Ascending aorta (tissue), 2 donors: ENCODE measurements at regions of chr1 and their contacts with region 1.

Region 1: GRCh38 chr1:204506961-204507387 is 9.2 kb upstream of the MDM4 start:
- DNase-seq: peak; percentile 42 to 93
- H3K4me3 ChIP-seq: peak overlapping the region; percentile 56 to 59
- H3K27ac ChIP-seq: peak overlapping the region; percentile 85 to 87
- H3K4me1 ChIP-seq: peaks cover 0 to 4% of the 10 kb centered on the region in 2 donors
- H3K27me3 ChIP-seq: no peaks in the 10 kb centered on the region
- CTCF ChIP-seq: no peak

Region 2: GRCh38 chr1:203795441-203796235 is 711.3 kb before region 1 on chr1 and contains the starts of genes ZBED6 and ZC3H11A:
- intact Hi-C with region 1: loop called (anchors 5 kb)
- DNase-seq: peak; percentile 97 to 100
- H3K4me3 ChIP-seq: peak within 1 kb of the TSS; percentile 82 to 92
- H3K27ac ChIP-seq: peak within 1 kb of the TSS; percentile 96 to 98
- H3K4me1 ChIP-seq: peaks cover 9 to 38% of the 10 kb centered on the region in 2 donors
- H3K27me3 ChIP-seq: no peaks in the 10 kb centered on the region
- CTCF ChIP-seq: no peak
- total RNA-seq, gene ZBED6: 1.5 TPM
- total RNA-seq, gene ZC3H11A: 44.4 TPM

Region 3: DNA sequence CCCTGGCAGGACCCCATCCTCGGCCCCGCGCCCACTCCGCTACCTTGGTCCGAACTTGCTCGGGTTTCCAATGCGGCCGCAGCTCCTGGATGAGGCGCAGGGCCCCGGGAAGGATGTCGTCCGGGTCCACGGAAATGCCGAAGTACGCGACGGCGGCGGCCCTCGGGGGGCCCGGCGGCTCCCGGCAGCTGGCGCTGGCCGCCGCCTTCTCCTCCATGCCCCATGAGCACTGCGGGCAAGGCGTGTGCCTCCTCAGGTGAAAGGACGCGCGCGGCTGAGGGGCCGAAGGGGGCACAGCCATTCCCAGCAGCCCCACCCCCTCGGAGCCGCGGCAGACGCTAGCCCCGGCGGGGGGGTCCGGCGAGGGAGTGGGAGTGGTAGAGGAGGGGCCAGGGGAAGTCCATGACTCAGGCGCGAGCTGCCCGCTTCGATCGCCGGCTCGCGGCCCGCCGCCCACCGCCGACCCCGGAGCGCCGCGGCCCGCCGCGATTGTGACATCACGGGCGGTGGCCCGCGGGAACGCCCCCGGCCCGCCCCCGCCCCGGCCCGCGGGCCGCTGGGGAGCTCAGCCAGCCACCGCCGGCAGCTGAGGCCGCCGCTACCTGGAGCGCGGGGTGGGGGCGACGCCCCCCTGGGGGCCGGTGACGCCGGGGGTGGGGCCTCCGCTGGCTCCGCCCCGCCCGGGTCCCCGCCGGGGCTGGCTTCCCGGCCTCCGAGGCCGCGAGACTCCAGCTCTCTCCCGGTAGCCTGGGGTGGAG is 355.2 kb before region 1 on chr1 and contains the start of gene ETNK2:
- intact Hi-C with region 1: loop called (anchors 5 kb)
- DNase-seq: peak; percentile 35 to 87
- H3K4me3 ChIP-seq: peak within 1 kb of the TSS; percentile 89 to 90
- H3K27ac ChIP-seq: peak within 1 kb of the TSS; percentile 88 to 94
- H3K4me1 ChIP-seq: peaks cover 0 to 8% of the 10 kb centered on the region in 2 donors
- H3K27me3 ChIP-seq: no peaks in the 10 kb centered on the region
- CTCF ChIP-seq: no peak
- total RNA-seq, gene ETNK2: 22.0 TPM

Region 4: GRCh38 chr1:204411451-204412204 is 95.3 kb before region 1 on chr1 and contains the start of gene PPP1R15B:
- intact Hi-C with region 1: loop called (anchors 2 kb)
- DNase-seq: peak; percentile 84 to 98
- H3K4me3 ChIP-seq: peak within 1 kb of the TSS; percentile 76 to 100
- H3K27ac ChIP-seq: peak within 1 kb of the TSS; percentile 98 to 100
- H3K4me1 ChIP-seq: peaks cover 6 to 11% of the 10 kb centered on the region in 2 donors
- H3K27me3 ChIP-seq: no peaks in the 10 kb centered on the region
- CTCF ChIP-seq: no peak
- total RNA-seq, gene PPP1R15B: 36.1 TPM

Region 5: GRCh38 chr1:204431310-204432165 is 75.4 kb before region 1 on chr1:
- intact Hi-C with region 1: loop called (anchors 1 kb)
- DNase-seq: peak in 1 of 2 donors; percentile 89
- H3K4me3 ChIP-seq: no peak overlapping the region
- H3K27ac ChIP-seq: peak overlapping the region; percentile 59 to 65
- H3K4me1 ChIP-seq: peaks cover 0 to 19% of the 10 kb centered on the region in 2 donors
- H3K27me3 ChIP-seq: no peaks in the 10 kb centered on the region
- CTCF ChIP-seq: peak; percentile 81 to 90 (median 89)

Region 6: DNA sequence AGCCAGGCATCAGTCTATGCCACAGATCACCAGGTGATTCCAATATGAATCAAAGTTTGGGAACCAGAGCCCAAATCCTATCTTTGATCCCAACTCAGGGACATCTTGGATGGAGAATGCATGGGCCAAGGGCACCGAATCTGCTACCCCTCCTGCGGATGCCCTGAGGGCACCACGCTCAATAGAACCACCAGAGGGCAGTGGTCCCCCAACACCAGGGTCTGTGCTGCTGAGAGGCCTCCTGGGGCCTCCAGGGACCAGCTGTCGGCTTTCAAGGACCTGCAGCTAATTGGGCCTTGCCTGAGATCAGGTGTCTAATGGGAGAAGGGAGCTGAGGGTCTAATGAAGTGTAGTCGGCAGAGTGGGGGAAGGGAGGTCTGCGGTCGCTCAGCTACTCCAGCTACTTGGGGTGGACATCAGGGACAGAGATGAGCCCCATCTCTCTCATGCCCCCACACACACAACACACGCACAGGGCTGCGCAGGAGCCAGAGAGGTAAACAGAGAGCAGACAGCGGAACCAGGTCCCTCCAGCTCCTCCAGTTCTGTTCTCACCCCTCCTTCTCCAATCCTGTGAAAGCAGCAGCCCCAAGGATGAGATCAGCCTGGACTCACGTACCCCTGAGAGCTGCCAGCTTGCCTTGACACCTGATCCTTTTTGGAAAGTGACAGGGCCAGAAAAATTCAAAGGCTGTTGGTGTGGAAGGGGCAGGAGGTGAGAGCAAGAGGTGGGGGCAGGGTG is 60.4 kb before region 1 on chr1:
- intact Hi-C with region 1: loop called (anchors 1 kb)
- DNase-seq: peak in 1 of 2 donors; percentile 85
- H3K4me3 ChIP-seq: no peak overlapping the region
- H3K27ac ChIP-seq: peak overlapping the region; percentile 19 to 58
- H3K4me1 ChIP-seq: peaks cover 12 to 43% of the 10 kb centered on the region in 2 donors
- H3K27me3 ChIP-seq: no peaks in the 10 kb centered on the region
- CTCF ChIP-seq: peak; percentile 69 to 84 (median 72)